CD14-positive monocyte (primary cell): ENCODE measurements at regions of chr1 and their contacts with region 1.

Region 1: GRCh38 chr1:212495766-212496494 is 63.2 kb downstream of the NENF start:
- DNase-seq: peak; percentile 33 to 68 (median 44)
- H3K4me3 ChIP-seq: no peak overlapping the region
- H3K4me3 Mint-ChIP-seq: no peak overlapping the region
- H3K27ac ChIP-seq: peak overlapping the region in 1 of 2 donors; percentile 35
- H3K27ac Mint-ChIP-seq: peak overlapping the region; percentile 52 to 81 (median 69)
- H3K4me1 ChIP-seq: peaks cover 14 to 17% of the 10 kb centered on the region in 2 donors
- H3K4me1 Mint-ChIP-seq: peaks cover 32% of the 10 kb centered on the region
- H3K27me3 ChIP-seq: no peaks in the 10 kb centered on the region
- H3K27me3 Mint-ChIP-seq: peaks cover 0 to 8% (median 5%) of the 10 kb centered on the region in 3 donors
- CTCF ChIP-seq: no peak

Region 2: GRCh38 chr1:212413902-212414327 is 82.0 kb before region 1 on chr1:
- intact Hi-C with region 1: no loop called
- DNase-seq: no peak
- H3K4me3 ChIP-seq: peak overlapping the region; percentile 75 to 83 (median 79)
- H3K4me3 Mint-ChIP-seq: peak overlapping the region; percentile 91 to 99
- H3K27ac ChIP-seq: peak overlapping the region; percentile 54 to 82
- H3K27ac Mint-ChIP-seq: peak overlapping the region; percentile 70 to 95 (median 82)
- H3K4me1 ChIP-seq: peaks cover 50 to 54% of the 10 kb centered on the region in 2 donors
- H3K4me1 Mint-ChIP-seq: peaks cover 58% of the 10 kb centered on the region
- H3K27me3 ChIP-seq: no peaks in the 10 kb centered on the region
- H3K27me3 Mint-ChIP-seq: peaks cover 0 to 2% (median 0%) of the 10 kb centered on the region in 3 donors
- CTCF ChIP-seq: no peak

Region 3: GRCh38 chr1:212514056-212514614 is 18.2 kb after region 1 on chr1:
- intact Hi-C with region 1: loop called in 1 of 2 experiments (anchors 2 kb)
- DNase-seq: peak; percentile 47 to 78 (median 65)
- H3K4me3 ChIP-seq: peak overlapping the region in 1 of 3 experiments; percentile 32
- H3K4me3 Mint-ChIP-seq: peak overlapping the region; percentile 58 to 88
- H3K27ac ChIP-seq: no peak overlapping the region
- H3K27ac Mint-ChIP-seq: peak overlapping the region in 4 of 7 donors; percentile 32 to 76 (median 70)
- H3K4me1 ChIP-seq: peaks cover 10 to 12% of the 10 kb centered on the region in 2 donors
- H3K4me1 Mint-ChIP-seq: peaks cover 13% of the 10 kb centered on the region
- H3K27me3 ChIP-seq: peaks cover 37 to 59% of the 10 kb centered on the region in 2 donors
- H3K27me3 Mint-ChIP-seq: peaks cover 61 to 78% (median 75%) of the 10 kb centered on the region in 3 donors
- CTCF ChIP-seq: no peak